Activated naive CD4-positive, alpha-beta T cell treated with anti-CD3 and anti-CD28 coated beads, Interleukin-2, amount 10 ng/mL, durations not matched to agents 7 days and 5 days (primary cell): ENCODE measurements at regions of chr7 and their contacts with region 1.

Region 1: GRCh38 chr7:43834463-43835251 is 34.7 kb downstream of the MRPS24 start:
- DNase-seq: peak; percentile 40
- H3K4me3 Mint-ChIP-seq: peak overlapping the region; percentile 60
- H3K27ac Mint-ChIP-seq: peak overlapping the region; percentile 61
- H3K4me1 Mint-ChIP-seq: peaks cover 21% of the 10 kb centered on the region
- H3K27me3 Mint-ChIP-seq: peaks cover 36% of the 10 kb centered on the region

Region 2: GRCh38 chr7:43572516-43573049 is 262.1 kb before region 1 on chr7:
- CTCF ChIA-PET with region 1: interaction called, 11 read pairs
- DNase-seq: peak; percentile 49
- H3K4me3 Mint-ChIP-seq: no peak overlapping the region
- H3K27ac Mint-ChIP-seq: no peak overlapping the region
- H3K4me1 Mint-ChIP-seq: peaks cover 27% of the 10 kb centered on the region
- H3K27me3 Mint-ChIP-seq: peaks cover 6% of the 10 kb centered on the region

Region 3: GRCh38 chr7:43647673-43648472 is 186.8 kb before region 1 on chr7:
- CTCF ChIA-PET with region 1: no interaction called
- DNase-seq: peak; percentile 57
- H3K4me3 Mint-ChIP-seq: peak overlapping the region; percentile 70
- H3K27ac Mint-ChIP-seq: peak overlapping the region; percentile 90
- H3K4me1 Mint-ChIP-seq: peaks cover 94% of the 10 kb centered on the region
- H3K27me3 Mint-ChIP-seq: no peaks in the 10 kb centered on the region

Region 4: DNA sequence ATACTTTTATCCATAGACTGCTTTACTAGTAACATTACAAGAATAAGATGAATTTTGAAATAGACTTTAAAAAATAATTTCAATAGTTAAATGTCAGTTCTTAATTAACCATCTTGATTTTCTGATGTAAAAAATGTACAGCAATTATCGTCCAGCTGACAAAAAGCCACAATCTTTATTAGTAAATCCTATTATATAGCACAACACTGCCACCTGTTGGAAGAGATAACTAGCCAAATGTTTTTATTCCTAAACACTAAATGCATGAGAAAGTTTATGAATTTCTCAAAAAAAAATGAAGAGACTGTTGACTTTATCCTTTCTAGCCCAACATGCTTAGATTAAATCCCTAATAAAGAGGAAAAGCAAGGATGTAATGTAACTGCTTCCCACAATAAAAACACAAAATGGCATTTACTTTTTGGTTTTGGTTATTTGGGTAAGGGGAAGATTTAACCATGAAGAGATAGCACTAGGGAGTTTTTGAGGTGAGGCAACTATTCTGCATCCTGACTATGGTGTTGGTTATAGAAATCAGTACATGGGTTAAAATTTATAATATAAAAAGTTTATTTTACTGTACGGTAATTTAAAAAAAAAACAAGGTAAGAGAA is 113.4 kb before region 1 on chr7:
- CTCF ChIA-PET with region 1: interaction called, 23 read pairs
- DNase-seq: no peak
- H3K4me3 Mint-ChIP-seq: no peak overlapping the region
- H3K27ac Mint-ChIP-seq: no peak overlapping the region
- H3K4me1 Mint-ChIP-seq: peaks cover 12% of the 10 kb centered on the region
- H3K27me3 Mint-ChIP-seq: no peaks in the 10 kb centered on the region

Region 5: DNA sequence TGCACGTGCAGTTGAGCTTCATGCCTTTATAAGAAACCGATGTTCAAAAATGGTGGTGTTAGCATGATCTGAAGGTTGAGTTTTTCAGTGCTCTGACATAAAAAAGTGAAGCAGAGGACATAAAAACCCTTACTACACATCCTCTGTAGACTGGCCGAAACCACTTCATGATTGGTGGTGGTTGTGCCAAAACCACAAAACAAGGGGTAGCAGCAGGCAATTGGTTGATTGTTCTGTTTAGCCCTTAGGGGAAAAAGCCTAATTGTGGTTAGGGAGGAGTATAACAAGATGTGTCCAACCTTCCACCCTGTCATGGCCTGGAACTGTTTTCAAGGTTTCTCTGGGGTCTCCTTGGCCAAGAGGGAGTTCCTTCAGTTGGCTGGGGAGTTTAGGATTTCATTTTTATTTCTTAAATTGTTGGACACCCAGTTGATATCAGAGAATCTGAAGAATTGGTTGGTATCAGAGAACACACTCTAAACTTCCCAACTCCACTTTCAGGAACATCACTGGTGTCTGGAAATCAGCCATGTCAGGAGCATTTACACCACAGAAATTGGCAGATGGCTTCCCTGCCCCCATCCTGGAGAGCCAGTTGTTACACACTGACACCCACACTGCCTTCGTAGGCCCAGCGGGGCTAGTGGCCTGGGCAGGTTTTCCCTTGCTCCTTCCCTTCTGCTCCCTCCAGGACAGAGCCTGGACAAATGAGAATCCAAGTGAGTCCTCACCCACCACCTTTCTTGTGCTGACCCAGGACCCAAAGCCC is 15.9 kb after region 1 on chr7:
- CTCF ChIA-PET with region 1: interaction called, 14 read pairs
- DNase-seq: no peak
- H3K4me3 Mint-ChIP-seq: no peak overlapping the region
- H3K27ac Mint-ChIP-seq: no peak overlapping the region
- H3K4me1 Mint-ChIP-seq: peaks cover 2% of the 10 kb centered on the region
- H3K27me3 Mint-ChIP-seq: peaks cover 24% of the 10 kb centered on the region